Testis (tissue), 5 donors: ENCODE measurements at regions of chr6 and their contacts with region 1.

Region 1: GRCh38 chr6:15691250-15691869 is 28.5 kb upstream of the DTNBP1 start:
- DNase-seq: peak; percentile 92
- H3K4me3 ChIP-seq: peak overlapping the region; percentile 40 to 50
- H3K27ac ChIP-seq: no peak overlapping the region
- H3K4me1 ChIP-seq: peaks cover 9% of the 10 kb centered on the region
- H3K27me3 ChIP-seq: no peaks in the 10 kb centered on the region
- CTCF ChIP-seq: peak; percentile 98 to 99 (median 99)
- POLR2A ChIP-seq: no peak

Region 2: GRCh38 chr6:16183187-16183664 is 491.9 kb after region 1 on chr6:
- intact Hi-C with region 1: loop called (anchors 5 kb)
- DNase-seq: no peak
- H3K4me3 ChIP-seq: no peak overlapping the region
- H3K27ac ChIP-seq: no peak overlapping the region
- H3K4me1 ChIP-seq: peaks cover 10% of the 10 kb centered on the region
- H3K27me3 ChIP-seq: no peaks in the 10 kb centered on the region
- CTCF ChIP-seq: peak; percentile 55 to 71 (median 69)
- POLR2A ChIP-seq: no peak